ENCODE measurements at regions of chr14 and their contacts with region 1.

Region 1: GRCh38 chr14:94691660-94692034 is 78.3 kb downstream of the GSC start:
- DNase-seq: no peak

Region 2: GRCh38 chr14:95098984-95099599 is 407.4 kb after region 1 on chr14:
- intact Hi-C with region 1: loop called (anchors 5 to 10 kb)
- DNase-seq: peak; percentile 87

Region 3: GRCh38 chr14:95106971-95107370 is 415.3 kb after region 1 on chr14:
- intact Hi-C with region 1: loop called (anchors 5 to 10 kb)
- DNase-seq: no peak

Measured in posterior vena cava (tissue), 2 donors.